Ovary (tissue), 10 donors: ENCODE measurements at regions of chr9 and their contacts with region 1.

Region 1: DNA sequence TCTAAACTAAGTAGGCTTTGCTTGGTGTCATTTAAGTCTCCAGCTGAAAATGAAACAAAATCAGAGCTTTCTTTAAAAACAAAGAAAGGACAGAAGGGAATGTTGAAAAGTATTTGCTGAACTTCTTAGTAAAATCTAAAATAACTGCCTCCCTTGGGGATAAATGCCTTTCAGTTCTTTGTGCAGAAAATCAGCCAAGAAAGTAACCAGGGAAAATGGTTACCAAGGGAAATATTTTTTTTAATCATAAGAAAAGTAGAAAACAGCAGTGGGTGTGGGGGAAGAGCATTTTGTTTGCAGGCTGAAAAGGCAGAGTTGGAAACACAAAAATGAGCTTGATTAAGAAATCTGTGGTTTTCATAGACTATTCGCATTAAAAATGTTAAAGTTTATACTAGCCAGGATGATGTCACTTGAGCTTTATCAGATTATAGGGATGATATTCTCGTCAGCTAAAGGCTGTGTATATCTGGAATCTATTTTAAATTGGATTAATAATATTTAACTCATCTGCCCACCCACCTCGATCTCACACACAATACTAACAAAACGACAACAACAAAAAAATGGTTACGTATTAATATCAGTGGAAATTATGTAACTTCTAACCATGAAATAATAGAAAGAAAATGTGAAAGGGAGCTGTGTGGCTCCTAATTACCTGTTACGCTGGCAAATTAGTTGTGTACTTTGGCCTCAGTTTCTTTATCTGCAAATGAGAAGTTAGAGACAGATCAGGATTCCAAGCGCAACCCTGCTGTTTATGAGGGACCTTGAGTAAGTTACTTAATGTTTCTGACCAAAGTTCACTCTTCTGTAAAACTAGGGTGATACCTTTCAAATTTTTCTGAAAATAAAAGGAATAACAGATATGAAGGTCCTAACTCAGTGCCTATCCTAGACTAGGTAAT is at the start of gene ECM2:
- DNase-seq: no peak
- H3K4me3 ChIP-seq: peak within 1 kb of the TSS; percentile 35
- H3K27ac ChIP-seq: peak within 1 kb of the TSS in 1 of 2 donors; percentile 66
- H3K4me1 ChIP-seq: peaks cover 4% of the 10 kb centered on the region
- H3K27me3 ChIP-seq: no peaks in the 10 kb centered on the region
- CTCF ChIP-seq: no peak
- EP300 ChIP-seq: no peak
- POLR2A ChIP-seq: no peak
- total RNA-seq, gene ECM2: 35.0 to 80.2 (median 63.1) TPM

Region 2: GRCh38 chr9:92481040-92481633 is 55.1 kb before region 1 on chr9:
- intact Hi-C with region 1: no loop called
- DNase-seq: no peak
- H3K4me3 ChIP-seq: peak overlapping the region; percentile 17
- H3K27ac ChIP-seq: peak overlapping the region in 1 of 2 donors; percentile 4
- H3K4me1 ChIP-seq: peaks cover 13% of the 10 kb centered on the region
- H3K27me3 ChIP-seq: no peaks in the 10 kb centered on the region
- CTCF ChIP-seq: no peak
- EP300 ChIP-seq: no peak
- POLR2A ChIP-seq: no peak

Region 3: GRCh38 chr9:92590377-92590776 is 54.2 kb after region 1 on chr9:
- intact Hi-C with region 1: loop called in 1 of 4 experiments (anchors 10 kb)
- DNase-seq: peak; percentile 59 to 75 (median 67)
- H3K4me3 ChIP-seq: no peak overlapping the region
- H3K27ac ChIP-seq: peak overlapping the region in 1 of 2 donors; percentile 26
- H3K4me1 ChIP-seq: peaks cover 6% of the 10 kb centered on the region
- H3K27me3 ChIP-seq: no peaks in the 10 kb centered on the region
- CTCF ChIP-seq: no peak
- EP300 ChIP-seq: no peak
- POLR2A ChIP-seq: no peak

Region 4: GRCh38 chr9:92616655-92617111 is 80.5 kb after region 1 on chr9:
- intact Hi-C with region 1: loop called in 1 of 4 experiments (anchors 5 kb)
- DNase-seq: peak; percentile 75 to 82 (median 78)
- H3K4me3 ChIP-seq: no peak overlapping the region
- H3K27ac ChIP-seq: peak overlapping the region; percentile 79 to 90
- H3K4me1 ChIP-seq: peaks cover 56% of the 10 kb centered on the region
- H3K27me3 ChIP-seq: no peaks in the 10 kb centered on the region
- CTCF ChIP-seq: no peak
- EP300 ChIP-seq: no peak
- POLR2A ChIP-seq: no peak

Region 5: DNA sequence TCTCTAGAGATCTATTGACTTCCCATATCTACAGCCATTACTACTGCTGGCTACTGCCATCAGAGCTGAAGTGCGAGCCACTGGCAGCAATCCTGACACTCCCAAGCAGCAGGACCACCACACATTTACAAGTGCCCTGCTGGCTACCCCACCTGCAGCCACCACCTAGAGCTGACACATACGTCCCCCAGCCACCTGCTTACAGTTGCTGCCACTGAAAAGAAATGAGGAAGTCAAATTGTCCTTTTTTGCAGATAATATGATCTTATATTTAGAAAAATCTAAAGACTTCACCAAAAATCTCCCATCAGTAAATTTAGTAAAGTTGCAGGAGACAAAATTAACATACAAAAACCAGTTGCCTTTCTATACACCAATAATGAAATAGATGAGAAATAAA is 293.2 kb after region 1 on chr9:
- intact Hi-C with region 1: no loop called
- DNase-seq: no peak
- H3K4me3 ChIP-seq: no peak overlapping the region
- H3K27ac ChIP-seq: no peak overlapping the region
- H3K4me1 ChIP-seq: no peaks in the 10 kb centered on the region
- H3K27me3 ChIP-seq: no peaks in the 10 kb centered on the region
- CTCF ChIP-seq: no peak
- EP300 ChIP-seq: no peak
- POLR2A ChIP-seq: no peak